ENCODE measurements at regions of chr6 and their contacts with region 1.

Region 1: GRCh38 chr6:90274451-90275030 is 22.1 kb downstream of the BACH2 start:
- DNase-seq: peak; percentile 92
- H3K4me3 Mint-ChIP-seq: peak overlapping the region; percentile 63
- H3K27ac Mint-ChIP-seq: peak overlapping the region; percentile 93
- H3K4me1 Mint-ChIP-seq: peaks cover 94% of the 10 kb centered on the region
- H3K27me3 Mint-ChIP-seq: no peaks in the 10 kb centered on the region

Region 2: GRCh38 chr6:90263633-90264032 is 10.9 kb before region 1 on chr6:
- CTCF ChIA-PET with region 1: interaction called, 16 read pairs
- POLR2A ChIA-PET with region 1: no interaction called
- DNase-seq: no peak
- H3K4me3 Mint-ChIP-seq: no peak overlapping the region
- H3K27ac Mint-ChIP-seq: peak overlapping the region; percentile 75
- H3K4me1 Mint-ChIP-seq: peaks cover 91% of the 10 kb centered on the region
- H3K27me3 Mint-ChIP-seq: no peaks in the 10 kb centered on the region

Region 3: DNA sequence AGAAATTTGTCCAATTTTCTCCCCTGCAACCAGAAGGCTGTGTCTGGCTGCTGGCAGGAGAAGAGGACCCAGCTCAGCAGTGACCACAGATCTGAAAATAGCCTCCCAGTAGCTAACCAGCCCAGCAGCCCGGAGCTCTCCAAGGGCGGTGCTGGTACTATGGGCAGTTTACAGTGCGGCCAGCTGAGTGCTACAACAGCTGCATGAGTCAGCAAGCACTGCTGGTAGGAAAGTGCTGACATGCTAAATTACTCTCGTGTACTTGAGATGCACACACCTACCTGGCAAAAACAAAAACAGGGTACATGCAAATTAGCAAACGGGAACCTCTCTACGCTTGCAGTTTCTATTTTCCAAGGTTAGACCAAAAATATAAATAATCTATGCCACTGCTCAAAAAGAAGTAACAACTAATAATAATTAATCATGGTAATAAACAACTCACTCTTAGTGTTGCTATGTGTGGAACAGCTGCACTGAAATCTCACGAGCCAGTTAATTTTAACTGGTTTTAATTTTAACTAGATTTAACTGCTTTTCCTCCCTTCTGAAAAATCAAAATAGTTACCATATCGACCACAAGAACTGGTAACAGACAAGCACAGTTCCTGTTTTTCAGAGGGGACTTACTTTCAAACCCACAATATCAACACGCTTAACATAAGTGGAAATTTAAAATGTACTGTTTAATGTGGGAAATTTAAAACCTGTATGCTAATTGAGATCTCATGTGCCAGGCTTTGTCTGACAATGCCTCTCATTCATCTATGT is 11.3 kb after region 1 on chr6:
- CTCF ChIA-PET with region 1: interaction called, 14 read pairs
- POLR2A ChIA-PET with region 1: no interaction called
- DNase-seq: peak; percentile 64
- H3K4me3 Mint-ChIP-seq: peak overlapping the region; percentile 71
- H3K27ac Mint-ChIP-seq: peak overlapping the region; percentile 92
- H3K4me1 Mint-ChIP-seq: peaks cover 89% of the 10 kb centered on the region
- H3K27me3 Mint-ChIP-seq: no peaks in the 10 kb centered on the region

Region 4: DNA sequence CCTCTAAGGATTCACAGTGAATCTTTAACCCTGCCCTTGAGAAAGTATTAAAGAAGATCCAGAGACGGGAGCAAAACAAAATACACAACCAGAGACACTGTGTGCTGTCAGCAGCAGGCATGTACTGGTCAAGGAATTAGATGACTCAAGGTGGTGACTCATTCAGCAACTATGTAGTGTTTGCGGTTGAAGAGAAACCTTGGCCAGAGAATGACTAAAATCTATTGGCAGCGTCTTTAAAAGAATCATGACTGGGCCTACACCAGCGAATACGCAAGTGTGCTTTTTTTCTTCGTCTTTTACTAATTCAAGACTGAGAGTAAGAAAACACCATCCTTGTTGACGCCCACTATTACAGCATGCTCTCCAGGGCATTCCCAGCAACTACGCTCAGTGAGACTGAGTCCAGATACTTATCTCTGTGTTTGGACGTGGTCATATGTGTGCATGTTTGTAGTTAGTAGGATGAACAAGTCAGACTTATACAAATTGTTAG is 94.5 kb after region 1 on chr6:
- CTCF ChIA-PET with region 1: no interaction called
- POLR2A ChIA-PET with region 1: no interaction called
- DNase-seq: peak; percentile 22
- H3K4me3 Mint-ChIP-seq: no peak overlapping the region
- H3K27ac Mint-ChIP-seq: peak overlapping the region; percentile 2
- H3K4me1 Mint-ChIP-seq: peaks cover 25% of the 10 kb centered on the region
- H3K27me3 Mint-ChIP-seq: no peaks in the 10 kb centered on the region